ENCODE measurements at regions of chr1 and their contacts with region 1.

Region 1: GRCh38 chr1:162854245-162854882 is 6.6 kb downstream of the CCDC190 start:
- DNase-seq: no peak
- H3K4me3 ChIP-seq: no peak overlapping the region
- H3K27ac ChIP-seq: no peak overlapping the region
- H3K4me1 ChIP-seq: peaks cover 0 to 5% (median 0%) of the 10 kb centered on the region in 4 donors
- H3K27me3 ChIP-seq: peaks cover 0 to 3% (median 0%) of the 10 kb centered on the region in 4 donors
- CTCF ChIP-seq: peak; percentile 70 to 80 (median 72)
- EP300 ChIP-seq: no peak
- POLR2A ChIP-seq: no peak

Region 2: GRCh38 chr1:162605225-162605927 is 249.0 kb before region 1 on chr1:
- intact Hi-C with region 1: no loop called
- DNase-seq: no peak
- H3K4me3 ChIP-seq: no peak overlapping the region
- H3K27ac ChIP-seq: peak overlapping the region; percentile 25 to 64 (median 40)
- H3K4me1 ChIP-seq: peaks cover 0 to 16% (median 7%) of the 10 kb centered on the region in 4 donors
- H3K27me3 ChIP-seq: no peaks in the 10 kb centered on the region
- CTCF ChIP-seq: no peak
- EP300 ChIP-seq: peak; percentile 8
- POLR2A ChIP-seq: no peak

Region 3: GRCh38 chr1:162726555-162726954 is 127.8 kb before region 1 on chr1:
- intact Hi-C with region 1: no loop called
- DNase-seq: no peak
- H3K4me3 ChIP-seq: no peak overlapping the region
- H3K27ac ChIP-seq: no peak overlapping the region
- H3K4me1 ChIP-seq: peaks cover 4 to 32% (median 29%) of the 10 kb centered on the region in 4 donors
- H3K27me3 ChIP-seq: no peaks in the 10 kb centered on the region
- CTCF ChIP-seq: no peak
- EP300 ChIP-seq: no peak
- POLR2A ChIP-seq: no peak

Region 4: DNA sequence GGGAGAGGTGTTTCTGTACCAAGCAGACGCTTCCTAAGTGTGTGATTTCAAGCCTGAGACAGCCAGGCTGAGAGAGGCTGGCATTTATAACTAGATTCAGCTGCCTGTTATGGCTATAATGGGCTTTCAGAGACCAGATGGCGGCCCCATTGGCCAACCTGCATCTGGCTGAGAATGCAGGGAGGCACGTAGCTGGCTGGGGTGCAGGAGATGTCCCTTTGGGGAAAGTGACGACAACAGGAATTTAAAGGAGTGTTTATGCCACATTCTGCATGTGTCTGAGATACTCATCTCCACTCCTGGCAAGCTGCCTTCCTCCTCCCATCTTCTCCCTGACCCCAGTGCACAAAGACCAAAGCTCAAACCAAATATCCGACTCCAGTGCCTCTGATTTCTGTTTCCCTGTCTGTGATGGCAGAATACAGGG is 27.9 kb after region 1 on chr1:
- intact Hi-C with region 1: no loop called
- DNase-seq: no peak
- H3K4me3 ChIP-seq: no peak overlapping the region
- H3K27ac ChIP-seq: no peak overlapping the region
- H3K4me1 ChIP-seq: no peaks in the 10 kb centered on the region
- H3K27me3 ChIP-seq: no peaks in the 10 kb centered on the region
- CTCF ChIP-seq: no peak
- EP300 ChIP-seq: no peak
- POLR2A ChIP-seq: no peak

Region 5: DNA sequence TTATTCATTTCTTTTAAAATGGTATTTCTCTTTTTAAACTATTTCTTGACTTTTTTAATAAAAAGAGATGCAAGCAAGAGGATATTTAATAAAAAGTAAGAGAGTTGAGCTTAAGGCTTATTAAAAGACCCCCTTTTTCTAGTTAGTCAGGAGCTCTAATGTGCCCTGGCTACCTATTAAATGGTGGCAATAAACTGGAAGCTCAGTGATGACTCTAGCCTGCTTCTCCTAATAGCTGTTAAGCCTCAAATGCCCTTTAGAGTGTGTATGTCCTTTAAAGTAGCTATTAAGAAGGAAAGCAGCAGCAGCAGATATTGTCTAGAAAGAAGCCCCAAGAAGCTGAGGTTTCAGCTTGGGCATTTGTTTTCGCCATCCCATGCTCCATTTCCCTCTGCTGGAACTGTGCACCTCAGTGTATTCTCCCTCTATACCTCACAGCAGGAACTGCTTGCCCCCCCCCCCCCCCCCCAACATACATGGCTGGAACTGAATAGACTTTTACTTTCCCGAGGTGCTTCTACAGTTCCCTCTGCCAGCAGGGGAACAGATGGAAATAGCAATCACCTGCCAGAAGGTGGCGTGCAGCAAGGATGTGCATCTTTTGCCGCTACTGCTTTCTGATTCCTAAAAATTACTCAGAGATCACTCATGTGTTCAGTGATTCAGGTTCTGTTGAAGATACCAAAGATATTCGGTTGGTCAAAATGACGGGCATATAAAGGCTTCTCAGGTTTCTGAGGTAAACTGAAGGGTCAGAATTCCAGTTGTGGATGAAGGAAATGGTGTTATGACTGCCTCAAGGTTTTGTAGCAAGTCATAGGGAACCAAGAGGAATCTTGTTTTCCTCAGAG is 217.3 kb after region 1 on chr1:
- intact Hi-C with region 1: loop called (anchors 5 kb)
- DNase-seq: no peak
- H3K4me3 ChIP-seq: peak overlapping the region; percentile 42 to 55 (median 49)
- H3K27ac ChIP-seq: peak overlapping the region; percentile 42 to 55 (median 50)
- H3K4me1 ChIP-seq: peaks cover 0 to 59% (median 48%) of the 10 kb centered on the region in 4 donors
- H3K27me3 ChIP-seq: no peaks in the 10 kb centered on the region
- CTCF ChIP-seq: peak; percentile 62 to 70 (median 63)
- EP300 ChIP-seq: no peak
- POLR2A ChIP-seq: no peak